Right cardiac atrium (tissue), 5 donors: ENCODE measurements at regions of chr3 and their contacts with region 1.

Region 1: GRCh38 chr3:37935756-37936666 is 54.6 kb upstream of the VILL start:
- DNase-seq: no peak
- ATAC-seq: peak; percentile 40 to 46
- H3K4me3 ChIP-seq: no peak overlapping the region
- H3K27ac ChIP-seq: peak overlapping the region; percentile 48
- H3K4me1 ChIP-seq: peaks cover 22% of the 10 kb centered on the region
- H3K27me3 ChIP-seq: no peaks in the 10 kb centered on the region

Region 2: DNA sequence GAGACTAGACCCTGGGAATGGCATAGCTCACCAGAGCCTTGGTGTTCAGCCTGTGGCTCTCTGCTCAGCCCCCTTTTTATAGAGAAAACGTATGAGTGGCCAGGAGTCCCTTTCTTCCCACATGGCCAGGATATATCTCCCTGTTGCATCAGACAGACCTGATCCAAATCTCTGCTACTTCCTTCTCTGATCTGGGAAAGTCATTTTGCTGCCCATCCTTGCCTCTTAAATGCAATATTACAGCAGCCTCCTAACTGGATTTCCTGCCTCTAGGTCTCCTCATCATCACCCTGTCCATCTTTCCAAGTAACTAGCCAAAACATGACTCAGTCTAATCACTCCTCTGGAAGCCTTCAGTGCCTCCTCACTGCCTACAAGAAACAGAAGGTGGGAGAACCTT is 31.4 kb before region 1 on chr3:
- intact Hi-C with region 1: loop called in 1 of 4 experiments (anchors 5 kb)
- DNase-seq: no peak
- ATAC-seq: no peak
- H3K4me3 ChIP-seq: no peak overlapping the region
- H3K27ac ChIP-seq: no peak overlapping the region
- H3K4me1 ChIP-seq: peaks cover 40% of the 10 kb centered on the region
- H3K27me3 ChIP-seq: no peaks in the 10 kb centered on the region